ENCODE measurements at regions of chrX and their contacts with region 1.

Region 1: DNA sequence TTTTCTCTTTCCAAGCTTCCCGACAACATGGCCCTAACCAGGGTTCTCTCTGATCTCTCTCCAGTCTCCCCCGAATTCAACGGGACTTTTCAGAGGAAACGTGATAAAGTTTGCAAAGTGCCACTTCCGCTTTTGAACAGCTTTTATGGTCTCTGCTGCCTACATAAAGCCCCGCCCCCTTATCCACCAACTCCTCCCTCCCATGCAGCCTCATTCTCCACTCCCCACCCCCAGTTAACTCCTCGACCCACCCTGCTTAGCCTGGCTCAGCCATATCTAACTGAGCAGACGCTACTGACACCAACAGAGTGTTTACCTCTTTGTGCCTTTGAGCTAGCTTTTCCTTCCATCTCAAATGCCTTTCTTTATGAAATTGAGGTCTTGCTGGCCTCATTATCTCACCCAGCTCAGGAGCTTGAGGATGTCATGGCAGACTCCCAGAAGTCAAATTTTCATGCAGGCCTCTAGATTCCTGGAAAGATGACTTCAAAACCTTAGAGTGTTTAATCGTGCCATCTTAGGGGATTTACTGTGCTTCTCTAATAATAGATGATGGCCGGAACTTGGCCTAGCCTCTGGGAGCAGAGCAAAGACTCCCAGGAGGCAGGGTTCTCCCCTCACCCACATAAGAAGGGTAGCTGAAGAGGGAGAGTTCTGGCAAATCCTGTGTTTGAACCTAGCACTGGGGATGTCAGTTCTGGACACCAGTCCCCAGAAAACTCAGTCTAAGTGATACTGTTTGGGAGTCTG is 606.0 kb downstream of the BCOR start:
- DNase-seq: peak; percentile 76
- H3K4me3 Mint-ChIP-seq: peak overlapping the region; percentile 21
- H3K27ac Mint-ChIP-seq: peak overlapping the region; percentile 76
- H3K4me1 Mint-ChIP-seq: peaks cover 53% of the 10 kb centered on the region
- H3K27me3 Mint-ChIP-seq: no peaks in the 10 kb centered on the region

Region 2: GRCh38 chrX:39439906-39440798 is 51.6 kb before region 1 on chrX:
- CTCF ChIA-PET with region 1: no interaction called
- intact Hi-C with region 1: loop called (anchors 5 kb)
- DNase-seq: peak; percentile 44
- H3K4me3 Mint-ChIP-seq: peak overlapping the region; percentile 42
- H3K27ac Mint-ChIP-seq: peak overlapping the region; percentile 86
- H3K4me1 Mint-ChIP-seq: peaks cover 29% of the 10 kb centered on the region
- H3K27me3 Mint-ChIP-seq: no peaks in the 10 kb centered on the region

Region 3: DNA sequence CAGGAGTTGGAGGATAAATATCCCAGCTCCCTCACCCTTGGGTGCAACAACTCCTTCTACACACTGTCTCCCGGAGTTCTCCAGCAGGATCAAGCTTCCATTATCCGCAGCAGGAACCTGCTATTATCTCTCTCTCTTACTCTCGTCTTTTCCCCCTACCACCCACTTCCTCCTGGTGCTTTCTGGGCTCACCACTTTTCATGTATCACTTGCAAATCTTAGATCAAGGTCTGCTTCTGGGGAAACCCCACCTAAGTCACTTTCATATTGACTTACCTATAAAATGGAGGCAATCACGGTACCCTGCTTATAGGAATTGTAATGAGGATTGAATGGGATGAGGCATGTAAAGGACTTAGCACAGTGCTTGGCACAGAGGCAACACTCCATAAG is 16.6 kb after region 1 on chrX:
- CTCF ChIA-PET with region 1: interaction called, 4 read pairs
- intact Hi-C with region 1: loop called (anchors 1 kb)
- DNase-seq: peak; percentile 52
- H3K4me3 Mint-ChIP-seq: no peak overlapping the region
- H3K27ac Mint-ChIP-seq: no peak overlapping the region
- H3K4me1 Mint-ChIP-seq: peaks cover 24% of the 10 kb centered on the region
- H3K27me3 Mint-ChIP-seq: no peaks in the 10 kb centered on the region

Measured in activated naive CD4-positive, alpha-beta T cell treated with anti-CD3 and anti-CD28 coated beads for 36 hours (primary cell).